ENCODE measurements at regions of chr19 and their contacts with region 1.

Region 1: GRCh38 chr19:58154679-58155648 is 4.4 kb upstream of the ZNF329 start:
- DNase-seq: peak; percentile 92 to 100 (median 98)
- ATAC-seq: peak; percentile 98
- H3K4me3 ChIP-seq: peak overlapping the region; percentile 97
- H3K4me3 Mint-ChIP-seq: peak overlapping the region; percentile 72 to 90 (median 84)
- H3K27ac ChIP-seq: peak overlapping the region; percentile 99
- H3K27ac Mint-ChIP-seq: peak overlapping the region; percentile 52 to 80 (median 73)
- H3K4me1 ChIP-seq: peaks cover 8 to 13% of the 10 kb centered on the region in 2 donors
- H3K4me1 Mint-ChIP-seq: peaks cover 6 to 33% (median 19%) of the 10 kb centered on the region in 7 donors
- H3K27me3 ChIP-seq: no peaks in the 10 kb centered on the region
- H3K27me3 Mint-ChIP-seq: no peaks in the 10 kb centered on the region

Region 2: DNA sequence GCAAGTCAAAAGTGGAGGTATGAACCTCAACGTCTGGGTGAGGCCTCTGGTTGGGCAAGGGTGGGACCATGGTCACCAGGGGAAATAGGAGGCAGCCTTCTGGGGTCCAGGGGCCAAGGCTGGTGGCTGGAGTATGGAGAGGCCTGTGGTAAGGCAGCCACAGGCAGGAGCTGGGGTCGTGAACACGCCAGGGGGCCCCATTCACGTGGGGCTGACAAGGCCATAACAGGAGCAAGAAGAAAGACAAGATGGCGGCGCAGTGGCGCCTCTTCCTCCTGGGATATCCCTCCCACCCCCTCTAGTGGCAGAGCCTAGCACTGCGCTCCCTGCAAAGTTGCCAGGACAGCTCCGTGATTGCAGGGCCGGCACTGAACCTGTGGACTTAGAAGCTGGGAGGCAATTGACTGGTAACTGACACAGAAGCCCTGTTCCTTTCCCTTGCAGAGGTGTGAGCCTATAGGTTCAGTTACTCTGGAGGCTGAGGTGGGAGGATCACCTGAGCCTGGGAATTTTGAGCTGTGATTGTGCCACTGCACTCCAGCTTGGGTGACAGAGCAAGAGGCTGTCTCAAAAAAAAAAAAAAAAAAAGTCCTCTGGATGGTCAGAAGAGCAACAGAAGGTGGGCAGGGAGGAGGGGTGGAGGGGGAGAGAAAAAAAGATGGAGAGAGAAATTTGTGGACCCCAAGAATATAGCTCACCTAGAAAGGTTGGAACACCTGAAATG is 1902.1 kb before region 1 on chr19:
- CTCF ChIA-PET with region 1: no interaction called
- POLR2A ChIA-PET with region 1: no interaction called
- intact Hi-C with region 1: loop called in 1 of 2 experiments (anchors 5 kb)
- DNase-seq: peak; percentile 30 to 69 (median 55)
- ATAC-seq: peak; percentile 82
- H3K4me3 ChIP-seq: no peak overlapping the region
- H3K4me3 Mint-ChIP-seq: no peak overlapping the region
- H3K27ac ChIP-seq: no peak overlapping the region
- H3K27ac Mint-ChIP-seq: no peak overlapping the region
- H3K4me1 ChIP-seq: no peaks in the 10 kb centered on the region
- H3K4me1 Mint-ChIP-seq: peaks cover 0 to 8% (median 0%) of the 10 kb centered on the region in 7 donors
- H3K27me3 ChIP-seq: no peaks in the 10 kb centered on the region
- H3K27me3 Mint-ChIP-seq: no peaks in the 10 kb centered on the region

Region 3: DNA sequence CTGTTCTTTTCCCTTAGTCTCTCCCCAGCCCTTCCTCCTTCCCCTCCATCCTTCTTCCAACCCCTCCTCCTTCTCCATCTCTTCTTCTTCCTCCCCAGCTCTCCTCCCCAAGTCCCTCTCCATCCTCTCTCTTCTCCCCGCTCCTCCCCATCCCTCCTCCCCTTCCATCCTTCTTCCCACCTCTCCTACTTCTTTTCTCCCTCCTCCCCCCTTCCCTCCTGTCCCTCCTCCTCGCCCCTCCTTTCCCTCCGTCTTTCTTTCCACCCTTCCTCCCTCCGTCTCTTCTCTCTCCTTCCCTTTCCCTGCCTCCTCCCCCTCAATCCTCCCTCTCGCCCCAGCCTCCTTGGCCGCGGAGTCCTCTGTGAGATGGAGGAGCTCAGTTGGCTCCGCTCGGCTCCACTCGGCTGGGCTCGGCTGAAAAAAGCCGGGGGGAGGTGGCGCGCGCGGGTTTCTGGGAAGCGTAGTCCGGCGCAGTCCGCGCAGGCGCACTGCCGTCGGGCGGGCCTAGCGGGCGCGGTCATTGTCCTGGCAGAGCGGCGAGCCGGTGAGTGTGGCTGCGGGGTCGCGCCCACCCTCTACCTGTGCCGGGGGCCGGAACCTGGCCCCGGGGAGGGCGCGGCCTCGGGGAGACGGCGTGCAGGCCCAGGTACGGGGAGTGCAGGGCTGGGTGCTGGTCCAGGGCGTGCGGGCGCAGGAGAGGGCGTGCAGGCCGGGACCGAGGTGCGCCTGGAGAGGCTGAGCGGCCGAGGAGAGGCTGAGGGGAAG is 1560.0 kb before region 1 on chr19 and contains the start of gene ZNF71:
- CTCF ChIA-PET with region 1: no interaction called
- POLR2A ChIA-PET with region 1: no interaction called
- intact Hi-C with region 1: loop called in 1 of 2 experiments (anchors 10 kb)
- DNase-seq: peak; percentile 75 to 89 (median 81)
- ATAC-seq: peak; percentile 96
- H3K4me3 ChIP-seq: peak within 1 kb of the TSS; percentile 57
- H3K4me3 Mint-ChIP-seq: peak within 1 kb of the TSS; percentile 83 to 99 (median 90)
- H3K27ac ChIP-seq: peak within 1 kb of the TSS; percentile 71
- H3K27ac Mint-ChIP-seq: peak within 1 kb of the TSS; percentile 72 to 94 (median 86)
- H3K4me1 ChIP-seq: peaks cover 0 to 3% of the 10 kb centered on the region in 2 donors
- H3K4me1 Mint-ChIP-seq: peaks cover 19 to 30% (median 21%) of the 10 kb centered on the region in 7 donors
- H3K27me3 ChIP-seq: no peaks in the 10 kb centered on the region
- H3K27me3 Mint-ChIP-seq: no peaks in the 10 kb centered on the region
- total RNA-seq, gene ZNF71: 4.5 to 7.7 (median 6.6) TPM

Region 4: GRCh38 chr19:57465495-57466395 is 689.2 kb before region 1 on chr19:
- CTCF ChIA-PET with region 1: no interaction called
- POLR2A ChIA-PET with region 1: no interaction called
- intact Hi-C with region 1: loop called in 1 of 2 experiments (anchors 1 kb)
- DNase-seq: peak in 3 of 9 donors; percentile 2 to 17 (median 8)
- ATAC-seq: peak; percentile 55
- H3K4me3 ChIP-seq: no peak overlapping the region
- H3K4me3 Mint-ChIP-seq: no peak overlapping the region
- H3K27ac ChIP-seq: no peak overlapping the region
- H3K27ac Mint-ChIP-seq: no peak overlapping the region
- H3K4me1 ChIP-seq: no peaks in the 10 kb centered on the region
- H3K4me1 Mint-ChIP-seq: peaks cover 0 to 2% (median 0%) of the 10 kb centered on the region in 7 donors
- H3K27me3 ChIP-seq: no peaks in the 10 kb centered on the region
- H3K27me3 Mint-ChIP-seq: no peaks in the 10 kb centered on the region

Region 5: DNA sequence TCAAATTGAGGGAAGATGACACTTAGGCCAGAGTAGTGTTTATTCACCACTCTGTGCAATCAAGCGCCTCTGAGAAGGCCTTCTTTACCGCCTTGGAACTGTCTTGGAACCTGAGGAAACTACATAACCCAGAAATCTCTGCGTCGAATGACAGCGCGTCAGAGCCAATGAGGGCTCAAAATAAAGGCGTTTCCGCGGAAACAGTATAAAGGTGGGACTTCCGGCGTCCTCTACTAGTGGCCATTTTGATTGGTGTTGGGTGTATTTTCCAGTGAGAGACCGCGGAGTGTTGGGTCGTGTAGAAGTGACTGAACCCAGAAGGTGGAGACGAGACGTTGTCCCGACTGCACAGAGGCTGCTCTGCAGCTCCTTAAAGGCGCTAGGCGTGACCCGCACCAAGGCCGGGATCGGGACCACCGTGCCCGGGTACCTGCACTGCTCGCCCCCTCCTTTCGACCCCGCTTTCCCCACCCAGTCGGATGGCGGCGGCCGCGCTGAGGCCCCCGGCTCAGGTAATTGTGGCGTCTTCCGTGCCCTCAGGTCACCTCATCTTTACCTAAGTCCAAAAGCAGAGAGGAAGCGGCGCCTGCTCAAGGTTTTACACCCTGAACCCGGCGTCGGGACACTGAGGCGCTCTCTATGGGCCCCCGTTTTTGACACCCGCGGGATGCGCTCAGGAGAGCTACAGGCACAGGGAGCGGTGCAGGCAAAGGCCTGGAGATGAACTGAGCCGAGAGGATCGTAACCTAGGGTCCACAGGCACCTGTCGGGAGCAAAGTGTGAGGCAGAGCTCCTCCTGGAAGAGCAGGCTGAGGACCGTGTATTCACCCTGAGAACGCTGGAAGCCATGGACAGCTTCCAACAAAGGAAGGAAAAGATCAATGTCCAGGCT is 408.1 kb before region 1 on chr19 and contains the start of gene ZNF776:
- CTCF ChIA-PET with region 1: no interaction called
- POLR2A ChIA-PET with region 1: no interaction called
- intact Hi-C with region 1: loop called (anchors 2 kb)
- DNase-seq: peak; percentile 40 to 90 (median 84)
- ATAC-seq: peak; percentile 99
- H3K4me3 ChIP-seq: peak within 1 kb of the TSS; percentile 86
- H3K4me3 Mint-ChIP-seq: peak within 1 kb of the TSS; percentile 91 to 99 (median 94)
- H3K27ac ChIP-seq: peak within 1 kb of the TSS; percentile 85
- H3K27ac Mint-ChIP-seq: peak within 1 kb of the TSS; percentile 81 to 99 (median 94)
- H3K4me1 ChIP-seq: peaks cover 6 to 16% of the 10 kb centered on the region in 2 donors
- H3K4me1 Mint-ChIP-seq: peaks cover 13 to 40% (median 26%) of the 10 kb centered on the region in 7 donors
- H3K27me3 ChIP-seq: no peaks in the 10 kb centered on the region
- H3K27me3 Mint-ChIP-seq: no peaks in the 10 kb centered on the region
- total RNA-seq, gene ZNF776: 18.9 to 52.3 (median 21.8) TPM

Region 6: GRCh38 chr19:58002384-58003173 is 152.4 kb before region 1 on chr19 and contains the start of gene ZNF606:
- CTCF ChIA-PET with region 1: no interaction called
- POLR2A ChIA-PET with region 1: interaction called, 3 read pairs
- intact Hi-C with region 1: loop called (anchors 1 to 5 kb)
- DNase-seq: peak; percentile 79 to 87 (median 85)
- ATAC-seq: peak; percentile 100
- H3K4me3 ChIP-seq: peak within 1 kb of the TSS; percentile 91
- H3K4me3 Mint-ChIP-seq: peak within 1 kb of the TSS; percentile 80 to 90 (median 88)
- H3K27ac ChIP-seq: peak within 1 kb of the TSS; percentile 90
- H3K27ac Mint-ChIP-seq: peak within 1 kb of the TSS; percentile 79 to 94 (median 88)
- H3K4me1 ChIP-seq: peaks cover 14 to 18% of the 10 kb centered on the region in 2 donors
- H3K4me1 Mint-ChIP-seq: peaks cover 15 to 40% (median 27%) of the 10 kb centered on the region in 7 donors
- H3K27me3 ChIP-seq: no peaks in the 10 kb centered on the region
- H3K27me3 Mint-ChIP-seq: no peaks in the 10 kb centered on the region
- total RNA-seq, gene ZNF606: 11.9 to 37.5 (median 15.3) TPM

Region 7: GRCh38 chr19:58083021-58083420 is 71.9 kb before region 1 on chr19:
- CTCF ChIA-PET with region 1: no interaction called
- POLR2A ChIA-PET with region 1: no interaction called
- intact Hi-C with region 1: no loop called
- DNase-seq: no peak
- ATAC-seq: no peak
- H3K4me3 ChIP-seq: no peak overlapping the region
- H3K4me3 Mint-ChIP-seq: no peak overlapping the region
- H3K27ac ChIP-seq: no peak overlapping the region
- H3K27ac Mint-ChIP-seq: no peak overlapping the region
- H3K4me1 ChIP-seq: no peaks in the 10 kb centered on the region
- H3K4me1 Mint-ChIP-seq: peaks cover 0 to 1% (median 0%) of the 10 kb centered on the region in 7 donors
- H3K27me3 ChIP-seq: no peaks in the 10 kb centered on the region
- H3K27me3 Mint-ChIP-seq: no peaks in the 10 kb centered on the region